Activated naive CD4-positive, alpha-beta T cell treated with anti-CD3 and anti-CD28 coated beads, Interleukin-2, amount 10 ng/mL, durations not matched to agents 7 days and 5 days (primary cell): ENCODE measurements at regions of chr3 and their contacts with region 1.

Region 1: GRCh38 chr3:9732080-9732739 is 675 bp downstream of the BRPF1 start:
- DNase-seq: peak; percentile 78
- H3K4me3 Mint-ChIP-seq: peak overlapping the region; percentile 99
- H3K27ac Mint-ChIP-seq: peak overlapping the region; percentile 94
- H3K4me1 Mint-ChIP-seq: peaks cover 69% of the 10 kb centered on the region
- H3K27me3 Mint-ChIP-seq: peaks cover 17% of the 10 kb centered on the region

Region 2: GRCh38 chr3:9749645-9750555 is 17.7 kb after region 1 on chr3 and contains the start of gene OGG1:
- CTCF ChIA-PET with region 1: interaction called, 12 read pairs
- DNase-seq: peak; percentile 98
- H3K4me3 Mint-ChIP-seq: peak within 1 kb of the TSS; percentile 92
- H3K27ac Mint-ChIP-seq: peak within 1 kb of the TSS; percentile 96
- H3K4me1 Mint-ChIP-seq: peaks cover 55% of the 10 kb centered on the region
- H3K27me3 Mint-ChIP-seq: no peaks in the 10 kb centered on the region

Region 3: GRCh38 chr3:9761919-9762318 is 29.7 kb after region 1 on chr3:
- CTCF ChIA-PET with region 1: no interaction called
- DNase-seq: no peak
- H3K4me3 Mint-ChIP-seq: no peak overlapping the region
- H3K27ac Mint-ChIP-seq: no peak overlapping the region
- H3K4me1 Mint-ChIP-seq: no peaks in the 10 kb centered on the region
- H3K27me3 Mint-ChIP-seq: no peaks in the 10 kb centered on the region

Region 4: GRCh38 chr3:9946112-9947024 is 214.2 kb after region 1 on chr3:
- CTCF ChIA-PET with region 1: no interaction called
- DNase-seq: peak; percentile 85
- H3K4me3 Mint-ChIP-seq: peak overlapping the region; percentile 74
- H3K27ac Mint-ChIP-seq: peak overlapping the region; percentile 19
- H3K4me1 Mint-ChIP-seq: peaks cover 17% of the 10 kb centered on the region
- H3K27me3 Mint-ChIP-seq: no peaks in the 10 kb centered on the region